Posterior cingulate gyrus (tissue), 11 donors: ENCODE measurements at regions of chr15 and their contacts with region 1.

Region 1: GRCh38 chr15:52568601-52569256 is at the start of gene ARPP19:
- DNase-seq: peak; percentile 79 to 98 (median 88)

Region 2: GRCh38 chr15:52256366-52256765 is 312.4 kb before region 1 on chr15:
- intact Hi-C with region 1: loop called (anchors 5 kb)
- DNase-seq: peak in 7 of 10 donors; percentile 62 to 94 (median 69)

Region 3: DNA sequence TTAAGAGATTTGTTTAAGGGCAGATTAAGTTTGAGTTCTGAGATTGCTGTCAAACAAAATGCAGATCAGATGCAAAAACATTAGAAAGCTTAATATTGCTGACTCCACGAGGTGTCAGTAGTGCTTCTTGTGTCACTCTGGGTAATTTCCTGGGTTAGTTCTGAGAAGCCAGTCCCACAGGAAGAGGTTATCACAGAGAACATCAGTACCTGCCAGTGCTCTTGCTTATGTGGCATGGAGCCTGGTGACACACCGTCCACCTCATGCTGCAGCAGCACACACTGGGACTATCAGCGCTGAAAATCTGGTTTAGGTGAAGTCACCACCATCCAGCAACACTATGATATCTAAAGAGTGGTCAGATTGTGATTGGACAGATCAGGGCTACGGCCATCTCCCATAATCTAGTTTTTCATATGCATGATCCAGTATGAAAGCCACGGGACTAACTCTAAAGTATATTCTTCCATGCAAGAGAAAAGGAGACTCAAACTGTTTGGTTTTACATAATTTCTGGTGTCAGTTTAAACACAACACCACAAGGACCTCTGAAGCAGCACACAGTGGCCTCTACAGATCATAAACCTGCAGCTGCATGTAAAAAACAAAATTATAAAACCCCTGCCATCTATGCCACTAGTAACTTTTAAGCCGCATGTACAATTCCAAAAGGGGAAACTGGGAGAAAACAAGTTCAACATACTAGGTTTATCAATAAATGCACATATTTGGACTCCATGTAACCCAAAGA is 237.1 kb before region 1 on chr15:
- intact Hi-C with region 1: loop called (anchors 2 kb)
- DNase-seq: no peak

Region 4: GRCh38 chr15:52528991-52529926 is 39.5 kb before region 1 on chr15:
- intact Hi-C with region 1: loop called (anchors 5 kb)
- DNase-seq: peak; percentile 74 to 97 (median 77)

Region 5: GRCh38 chr15:52679232-52680040 is 110.7 kb after region 1 on chr15 and contains the start of gene ATOSA:
- intact Hi-C with region 1: loop called (anchors 1 kb)
- DNase-seq: peak; percentile 93 to 99 (median 96)